GM12878 (cell line): ENCODE measurements at regions of chr11 and their contacts with region 1.

Region 1: DNA sequence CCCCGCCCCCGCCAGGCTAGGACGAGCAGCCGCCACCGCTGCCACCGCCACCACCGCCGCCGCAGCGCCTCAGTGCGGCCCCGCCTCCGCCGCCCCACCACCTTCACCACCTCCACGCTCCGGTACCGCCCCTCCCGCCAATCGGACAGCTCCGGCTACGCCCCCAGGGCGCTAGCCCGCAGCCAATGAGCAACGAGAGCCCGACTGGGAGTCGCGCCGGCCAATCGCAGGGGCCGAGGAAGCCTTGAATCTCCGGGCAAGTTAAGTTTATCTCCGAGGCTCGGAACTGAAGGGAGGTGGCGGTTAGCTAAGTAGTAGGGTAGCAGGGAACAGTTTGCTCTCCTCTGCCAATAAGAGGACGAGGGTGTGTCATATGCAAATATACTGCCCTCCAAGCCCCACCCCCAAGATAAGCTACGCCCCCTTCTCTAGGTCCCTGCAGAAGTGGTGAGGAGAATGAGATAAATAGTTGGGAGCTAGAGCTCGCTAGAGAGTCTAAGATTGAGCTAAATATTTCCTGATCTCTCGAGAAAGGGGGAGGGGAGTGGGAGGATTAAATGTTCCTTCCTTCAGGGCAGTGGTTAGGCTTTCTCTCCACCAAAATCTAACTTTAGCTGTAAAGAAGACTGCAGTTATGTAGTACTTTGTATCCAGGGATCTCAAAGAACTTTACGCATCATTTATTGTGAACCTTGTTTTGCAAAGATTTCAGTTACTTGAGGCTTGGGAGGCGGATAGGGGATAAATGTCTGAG is at the start of gene SESN3:
- DNase-seq: peak; percentile 93
- ATAC-seq: peak; percentile 89
- H3K4me3 ChIP-seq: peak within 1 kb of the TSS; percentile 62
- H3K27ac ChIP-seq: no peak within 1 kb of the TSS
- H3K4me1 ChIP-seq: peaks cover 8% of the 10 kb centered on the region
- H3K27me3 ChIP-seq: peaks cover 0 to 27% of the 10 kb centered on the region in 2 experiments; a peak in 2 of 4 replicates
- CTCF ChIP-seq: no peak; a peak in 1 of 6 replicates
- EP300 ChIP-seq: peak in 1 of 2 experiments; percentile 23; a peak in 1 of 4 replicates
- POLR2A ChIP-seq: peak; percentile 57; the same call in 1 of the 2 replicates
- RAD21 ChIP-seq: peak; percentile 35; the same call in 1 of the 2 replicates
- polyA plus RNA-seq, gene SESN3: 0.68 to 1.5 TPM

Region 2: DNA sequence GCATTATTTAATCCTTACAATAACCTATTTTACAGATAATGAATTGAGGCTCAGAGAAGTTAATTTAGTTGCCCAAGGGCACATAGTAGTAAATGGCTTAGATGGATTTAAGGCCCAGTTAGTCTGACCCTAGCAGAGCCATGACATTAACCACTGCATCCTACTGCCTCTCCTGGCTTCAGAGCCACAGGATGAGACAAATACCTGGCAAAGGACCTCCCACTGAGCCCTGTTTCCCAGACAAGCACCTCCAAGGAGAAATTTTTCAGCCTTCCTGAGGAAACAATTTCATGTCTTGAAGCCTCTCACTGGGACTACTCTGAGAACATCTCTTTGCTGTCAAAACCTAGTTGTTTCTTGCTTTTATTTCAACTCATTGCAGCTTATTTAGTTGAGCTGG is 898.5 kb before region 1 on chr11:
- CTCF ChIA-PET with region 1: no interaction called
- POLR2A ChIA-PET with region 1: no interaction called
- RAD21 ChIA-PET with region 1: no interaction called
- SMC1A ChIA-PET with region 1: no interaction called
- in situ Hi-C with region 1: no loop called
- intact Hi-C with region 1: no loop called
- DNase-seq: no peak
- ATAC-seq: no peak
- H3K4me3 ChIP-seq: no peak overlapping the region
- H3K27ac ChIP-seq: no peak overlapping the region
- H3K4me1 ChIP-seq: no peaks in the 10 kb centered on the region
- H3K27me3 ChIP-seq: no peaks in the 10 kb centered on the region
- CTCF ChIP-seq: no peak
- EP300 ChIP-seq: no peak
- POLR2A ChIP-seq: no peak
- RAD21 ChIP-seq: no peak

Region 3: DNA sequence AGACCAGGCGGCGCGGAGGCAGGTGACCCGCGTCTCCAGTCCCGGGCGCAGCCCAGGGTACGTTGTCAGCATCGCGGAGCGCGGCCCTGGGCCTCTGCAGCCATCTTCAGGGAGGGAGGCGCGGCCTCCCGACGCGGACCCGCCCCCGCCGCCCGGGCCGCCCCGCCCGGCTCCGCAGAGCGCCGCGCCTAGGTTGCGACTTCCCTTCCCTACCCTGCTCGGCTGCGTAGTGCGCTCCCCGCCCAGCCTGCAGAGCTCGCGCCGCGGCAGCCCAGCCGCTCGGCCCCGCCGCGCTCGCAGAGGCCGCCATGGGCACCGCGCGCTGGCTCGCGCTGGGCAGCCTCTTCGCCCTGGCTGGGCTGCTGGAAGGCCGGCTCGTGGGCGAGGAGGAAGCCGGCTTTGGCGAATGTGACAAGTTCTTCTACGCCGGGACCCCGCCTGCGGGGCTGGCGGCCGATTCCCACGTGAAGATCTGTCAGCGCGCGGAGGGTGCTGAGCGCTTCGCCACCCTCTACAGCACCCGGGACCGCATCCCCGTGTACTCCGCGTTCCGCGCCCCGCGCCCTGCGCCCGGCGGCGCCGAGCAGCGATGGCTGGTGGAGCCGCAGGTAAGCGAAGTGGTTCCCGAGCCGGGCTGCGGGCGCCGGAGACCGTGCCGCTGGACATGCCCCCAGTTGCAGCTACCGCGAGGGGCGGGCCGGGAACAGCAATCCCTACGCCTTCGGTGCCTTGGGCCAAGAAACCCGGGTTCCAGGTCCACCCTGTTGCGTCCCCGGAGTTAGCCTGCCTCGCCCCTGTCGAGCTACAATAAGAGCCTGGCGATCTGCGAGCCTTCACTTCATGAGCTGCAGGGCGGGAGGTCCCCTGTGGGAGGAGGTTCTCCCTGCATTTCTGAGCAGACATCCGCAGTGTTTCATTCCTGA is 141.4 kb before region 1 on chr11 and contains the start of gene ENDOD1:
- CTCF ChIA-PET with region 1: interaction called, 3 read pairs
- POLR2A ChIA-PET with region 1: interaction called, 8 read pairs
- RAD21 ChIA-PET with region 1: interaction called, 3 read pairs
- SMC1A ChIA-PET with region 1: interaction called, 3 read pairs
- in situ Hi-C with region 1: no loop called
- intact Hi-C with region 1: loop called (anchors 5 kb)
- DNase-seq: no peak
- ATAC-seq: peak; percentile 93
- H3K4me3 ChIP-seq: peak within 1 kb of the TSS; percentile 94
- H3K27ac ChIP-seq: peak within 1 kb of the TSS; percentile 84
- H3K4me1 ChIP-seq: peaks cover 27% of the 10 kb centered on the region
- H3K27me3 ChIP-seq: no peaks in the 10 kb centered on the region
- CTCF ChIP-seq: peak in 1 of 3 experiments; percentile 9; a peak in 1 of 6 replicates
- EP300 ChIP-seq: no peak
- POLR2A ChIP-seq: peak; percentile 93
- RAD21 ChIP-seq: no peak
- polyA plus RNA-seq, gene ENDOD1: 6.0 to 6.4 TPM

Region 4: DNA sequence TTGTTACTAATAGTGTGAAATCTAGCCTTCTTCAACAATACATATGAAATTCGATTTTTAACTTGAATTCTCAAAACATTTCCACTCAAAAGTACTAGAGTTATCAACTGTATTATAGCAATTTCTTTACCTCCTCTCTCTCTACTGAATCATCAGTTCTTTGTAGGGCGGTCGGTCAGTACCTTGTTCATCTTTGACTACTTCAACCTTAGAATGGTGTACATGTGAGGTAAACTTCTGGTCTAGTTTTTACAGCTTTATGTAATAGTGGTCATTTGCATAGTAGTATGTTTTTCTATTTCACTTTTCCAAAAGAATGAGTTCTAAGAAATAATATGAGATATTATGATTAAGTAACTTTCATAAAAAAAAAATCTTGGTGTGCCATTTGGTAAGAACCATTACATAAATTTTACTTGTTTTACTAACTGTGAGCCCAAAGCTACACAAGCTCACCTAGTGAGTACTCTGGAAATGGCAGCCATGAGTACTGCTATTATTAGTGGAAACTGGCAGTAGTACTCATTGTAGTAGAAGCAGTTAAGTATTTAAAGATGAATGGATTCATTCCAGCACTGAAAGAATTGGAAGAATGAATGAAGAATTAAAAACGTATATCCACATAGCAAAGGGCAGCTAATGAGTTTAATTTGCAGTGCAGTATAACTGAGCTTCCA is 30.4 kb before region 1 on chr11:
- CTCF ChIA-PET with region 1: interaction called, 5 read pairs
- POLR2A ChIA-PET with region 1: interaction called, 4 read pairs
- RAD21 ChIA-PET with region 1: interaction called, 12 read pairs
- SMC1A ChIA-PET with region 1: interaction called, 11 read pairs
- in situ Hi-C with region 1: no loop called
- intact Hi-C with region 1: no loop called
- DNase-seq: no peak
- ATAC-seq: 0 out of 3 replicates have a peak, but pooled peaks have one; percentile 24
- H3K4me3 ChIP-seq: no peak overlapping the region
- H3K27ac ChIP-seq: no peak overlapping the region
- H3K4me1 ChIP-seq: no peaks in the 10 kb centered on the region
- H3K27me3 ChIP-seq: no peaks in the 10 kb centered on the region; a peak in 1 of 4 replicates
- CTCF ChIP-seq: no peak
- EP300 ChIP-seq: no peak
- POLR2A ChIP-seq: no peak
- RAD21 ChIP-seq: no peak

Region 5: GRCh38 chr11:95254131-95254704 is 22.9 kb after region 1 on chr11:
- CTCF ChIA-PET with region 1: interaction called, 49 read pairs
- POLR2A ChIA-PET with region 1: interaction called, 160 read pairs
- RAD21 ChIA-PET with region 1: interaction called, 195 read pairs
- SMC1A ChIA-PET with region 1: interaction called, 261 read pairs
- in situ Hi-C with region 1: no loop called
- intact Hi-C with region 1: loop called (anchors 1 kb)
- DNase-seq: peak; percentile 96
- ATAC-seq: peak; percentile 96
- H3K4me3 ChIP-seq: 0 out of 2 replicates have a peak overlapping the region, but pooled peaks have one; percentile 0
- H3K27ac ChIP-seq: peak overlapping the region; percentile 77
- H3K4me1 ChIP-seq: peaks cover 47% of the 10 kb centered on the region
- H3K27me3 ChIP-seq: no peaks in the 10 kb centered on the region
- CTCF ChIP-seq: no peak
- EP300 ChIP-seq: peak in 1 of 2 experiments; percentile 63; a peak in 2 of 4 replicates
- POLR2A ChIP-seq: peak; percentile 64
- RAD21 ChIP-seq: no peak

Region 6: DNA sequence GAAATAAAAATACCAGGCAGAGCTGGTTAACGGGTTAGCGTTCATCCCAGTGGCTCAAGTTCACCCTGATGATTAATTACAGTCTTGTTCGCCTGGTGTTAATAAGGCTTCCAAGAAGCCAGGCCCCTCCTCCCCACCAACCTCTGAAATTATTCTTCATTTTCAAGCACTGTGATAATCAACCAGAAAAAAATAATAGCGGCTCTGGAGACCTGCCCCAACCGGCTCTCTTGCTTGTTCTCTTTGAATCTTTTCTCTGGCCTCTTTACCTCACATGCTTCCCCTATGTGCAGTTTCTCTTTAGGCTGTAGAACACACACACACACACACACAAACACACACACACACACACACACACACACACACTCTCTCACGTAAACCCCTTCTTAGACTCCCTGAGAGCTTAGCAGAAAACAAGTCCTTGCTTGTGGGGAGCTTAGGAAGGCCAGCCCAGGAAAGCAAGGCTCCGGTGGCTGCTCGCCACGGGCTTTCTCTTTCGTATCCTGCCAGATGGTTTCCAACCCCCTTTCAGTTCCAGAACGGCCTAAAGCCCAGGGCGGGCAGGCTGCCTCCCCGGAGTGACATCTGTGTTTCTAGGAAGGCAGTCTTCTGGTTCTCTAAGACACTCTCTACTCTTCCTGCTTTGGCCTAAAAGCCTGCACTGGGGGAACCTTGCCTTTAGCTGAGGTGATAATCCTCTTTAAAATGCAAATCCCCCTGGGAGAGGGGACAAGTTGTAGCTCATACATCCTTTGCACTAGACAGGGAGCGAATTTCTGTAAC is 106.1 kb after region 1 on chr11:
- CTCF ChIA-PET with region 1: interaction called, 3 read pairs
- POLR2A ChIA-PET with region 1: interaction called, 4 read pairs
- RAD21 ChIA-PET with region 1: interaction called, 11 read pairs
- SMC1A ChIA-PET with region 1: interaction called, 9 read pairs
- in situ Hi-C with region 1: no loop called
- intact Hi-C with region 1: loop called (anchors 5 kb)
- DNase-seq: peak; percentile 36
- ATAC-seq: peak; percentile 84
- H3K4me3 ChIP-seq: no peak overlapping the region
- H3K27ac ChIP-seq: no peak overlapping the region
- H3K4me1 ChIP-seq: peaks cover 6% of the 10 kb centered on the region
- H3K27me3 ChIP-seq: no peaks in the 10 kb centered on the region; a peak in 1 of 4 replicates
- CTCF ChIP-seq: no peak
- EP300 ChIP-seq: no peak
- POLR2A ChIP-seq: no peak
- RAD21 ChIP-seq: no peak

Region 7: DNA sequence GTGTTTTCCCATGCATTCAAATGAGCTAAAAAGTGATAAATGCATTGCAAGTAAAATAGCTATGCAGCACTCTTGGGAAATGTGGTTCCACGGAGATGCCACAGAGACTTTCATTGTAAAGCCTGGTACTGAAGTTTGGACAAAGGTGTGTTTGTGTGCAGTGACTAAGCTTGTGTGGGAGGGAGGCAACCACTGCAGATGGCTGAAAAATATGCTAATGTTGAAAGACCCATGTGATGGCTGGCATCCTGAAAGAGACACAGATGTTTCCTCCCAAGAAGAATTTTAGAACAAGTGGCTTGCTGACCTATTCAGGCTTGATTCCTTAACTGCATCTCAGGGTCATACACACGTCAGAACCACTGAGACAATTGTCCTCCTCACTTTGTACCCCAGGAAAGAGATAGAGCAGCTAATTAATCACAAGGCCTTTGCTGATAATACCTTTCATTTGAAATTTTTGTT is 484.5 kb after region 1 on chr11:
- CTCF ChIA-PET with region 1: interaction called, 13 read pairs
- POLR2A ChIA-PET with region 1: interaction called, 39 read pairs
- RAD21 ChIA-PET with region 1: interaction called, 71 read pairs
- SMC1A ChIA-PET with region 1: interaction called, 30 read pairs
- in situ Hi-C with region 1: no loop called
- intact Hi-C with region 1: no loop called
- DNase-seq: peak; percentile 89
- ATAC-seq: peak; percentile 84
- H3K4me3 ChIP-seq: no peak overlapping the region
- H3K27ac ChIP-seq: no peak overlapping the region
- H3K4me1 ChIP-seq: peaks cover 26% of the 10 kb centered on the region
- H3K27me3 ChIP-seq: no peaks in the 10 kb centered on the region
- CTCF ChIP-seq: no peak
- EP300 ChIP-seq: peak; percentile 87 to 89; a peak in 3 of 4 replicates
- POLR2A ChIP-seq: no peak
- RAD21 ChIP-seq: no peak